Mammary epithelial cell (primary cell): ENCODE measurements at regions of chr6 and their contacts with region 1.

Region 1: GRCh38 chr6:153231048-153231646 is 100.1 kb upstream of the RGS17 start:
- DNase-seq: peak; percentile 44
- H3K4me3 ChIP-seq: no peak overlapping the region
- H3K27ac ChIP-seq: no peak overlapping the region
- H3K4me1 ChIP-seq: no peaks in the 10 kb centered on the region
- H3K27me3 ChIP-seq: no peaks in the 10 kb centered on the region
- CTCF ChIP-seq: peak; percentile 99 to 100

Region 2: GRCh38 chr6:153032255-153032882 is 198.8 kb before region 1 on chr6:
- CTCF ChIA-PET with region 1: no interaction called
- dilution Hi-C with region 1: no loop called
- in situ Hi-C with region 1: no loop called
- intact Hi-C with region 1: loop called (anchors 5 kb)
- DNase-seq: peak; percentile 19
- H3K4me3 ChIP-seq: no peak overlapping the region
- H3K27ac ChIP-seq: peak overlapping the region; percentile 49
- H3K4me1 ChIP-seq: peaks cover 16% of the 10 kb centered on the region
- H3K27me3 ChIP-seq: no peaks in the 10 kb centered on the region
- CTCF ChIP-seq: peak; percentile 38 to 40

Region 3: DNA sequence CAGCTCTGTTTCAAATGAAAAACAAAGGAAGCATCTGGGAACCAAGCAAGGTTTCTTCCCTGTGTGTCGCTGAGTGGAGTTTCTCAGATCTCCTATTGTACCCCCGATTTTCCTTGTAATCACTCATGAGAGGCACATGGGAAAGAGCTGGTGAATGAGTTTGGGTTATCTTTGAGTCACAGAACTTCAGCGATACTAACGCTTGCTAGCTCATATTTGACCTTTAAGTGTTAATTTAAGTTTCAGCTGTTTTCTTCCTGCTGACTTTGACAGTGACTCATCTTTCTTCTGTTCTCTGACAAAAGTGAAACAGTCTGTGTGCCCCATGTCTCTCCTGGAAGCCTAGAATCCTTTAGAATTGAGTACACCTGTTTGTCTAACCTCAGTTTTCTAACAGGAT is 161.0 kb after region 1 on chr6:
- CTCF ChIA-PET with region 1: no interaction called
- dilution Hi-C with region 1: no loop called
- in situ Hi-C with region 1: no loop called
- intact Hi-C with region 1: no loop called
- DNase-seq: peak; percentile 3
- H3K4me3 ChIP-seq: no peak overlapping the region
- H3K27ac ChIP-seq: no peak overlapping the region
- H3K4me1 ChIP-seq: no peaks in the 10 kb centered on the region
- H3K27me3 ChIP-seq: no peaks in the 10 kb centered on the region
- CTCF ChIP-seq: no peak

Region 4: GRCh38 chr6:153511896-153512496 is 280.8 kb after region 1 on chr6:
- CTCF ChIA-PET with region 1: interaction called, 4 read pairs
- dilution Hi-C with region 1: no loop called
- in situ Hi-C with region 1: loop called (anchors 10 kb)
- intact Hi-C with region 1: loop called (anchors 1 kb)
- DNase-seq: peak; percentile 25
- H3K4me3 ChIP-seq: no peak overlapping the region
- H3K27ac ChIP-seq: no peak overlapping the region
- H3K4me1 ChIP-seq: no peaks in the 10 kb centered on the region
- H3K27me3 ChIP-seq: no peaks in the 10 kb centered on the region
- CTCF ChIP-seq: peak; percentile 52 to 70

Region 5: GRCh38 chr6:153947808-153948447 is 716.8 kb after region 1 on chr6:
- CTCF ChIA-PET with region 1: no interaction called
- dilution Hi-C with region 1: no loop called
- in situ Hi-C with region 1: no loop called
- intact Hi-C with region 1: loop called (anchors 1 kb)
- DNase-seq: peak; percentile 14
- H3K4me3 ChIP-seq: no peak overlapping the region
- H3K27ac ChIP-seq: no peak overlapping the region
- H3K4me1 ChIP-seq: no peaks in the 10 kb centered on the region
- H3K27me3 ChIP-seq: no peaks in the 10 kb centered on the region
- CTCF ChIP-seq: peak; percentile 82 to 94

Region 6: DNA sequence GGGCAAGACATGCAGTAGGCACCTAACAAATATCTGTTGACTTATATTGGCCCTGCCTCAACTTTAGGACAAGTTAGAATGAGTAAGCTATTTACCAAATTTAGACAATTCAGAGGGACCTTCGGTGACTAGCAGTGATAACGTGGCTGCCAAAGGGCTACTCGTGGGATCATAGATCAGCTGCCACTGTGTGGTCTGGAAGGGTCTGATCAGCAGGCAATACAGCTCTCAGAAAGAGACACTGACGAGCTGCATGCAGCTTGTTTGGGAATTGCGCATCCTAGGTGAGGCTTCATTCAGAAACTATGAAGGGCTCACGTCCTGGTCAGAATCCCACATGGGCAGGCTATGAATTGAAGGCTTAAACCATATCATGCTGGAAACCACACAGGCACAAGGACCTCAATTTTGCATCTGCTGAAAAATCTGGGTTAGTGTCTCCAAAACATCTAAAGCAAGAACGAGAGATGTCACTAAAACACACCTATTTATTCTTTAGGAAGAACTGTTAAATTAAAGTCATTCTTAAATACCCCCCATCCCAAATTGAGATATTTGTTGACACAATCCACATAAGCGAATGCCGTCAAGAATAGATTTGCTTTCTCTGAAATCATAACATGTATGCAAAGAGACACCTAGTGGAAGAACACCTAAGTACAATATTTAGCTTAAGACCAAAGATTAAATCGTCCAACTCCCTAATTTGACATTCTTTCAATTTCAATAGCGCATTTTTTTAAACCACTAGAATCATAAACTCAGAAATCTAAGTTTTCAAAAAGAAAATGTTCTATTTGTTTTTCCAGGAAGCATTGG is 1045.9 kb after region 1 on chr6:
- CTCF ChIA-PET with region 1: no interaction called
- dilution Hi-C with region 1: no loop called
- in situ Hi-C with region 1: no loop called
- intact Hi-C with region 1: loop called (anchors 2 kb)
- DNase-seq: no peak
- H3K4me3 ChIP-seq: peak overlapping the region; percentile 30 to 53 (median 43)
- H3K27ac ChIP-seq: no peak overlapping the region
- H3K4me1 ChIP-seq: no peaks in the 10 kb centered on the region
- H3K27me3 ChIP-seq: no peaks in the 10 kb centered on the region
- CTCF ChIP-seq: peak; percentile 60 to 65